Naive thymus-derived CD4-positive, alpha-beta T cell (primary cell): ENCODE measurements at regions of chr11 and their contacts with region 1.

Region 1: DNA sequence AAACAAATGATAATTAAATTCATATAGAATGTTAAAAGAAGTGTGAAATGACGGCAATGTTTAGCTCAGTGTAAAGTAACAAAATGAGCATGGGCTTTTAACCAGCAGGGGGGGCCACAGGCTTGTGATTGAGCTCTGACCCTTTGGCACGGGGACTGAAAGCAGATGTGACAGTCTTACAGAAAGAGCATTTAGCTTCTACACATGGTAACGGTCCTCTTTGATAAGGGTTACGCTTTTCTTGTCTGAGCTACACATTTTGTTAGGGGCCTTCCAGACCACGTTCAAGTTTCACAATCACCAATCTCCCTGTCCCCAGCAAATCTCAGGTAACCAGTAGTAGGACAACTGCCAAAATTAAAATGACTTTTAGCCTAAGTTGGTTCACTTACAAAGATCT is 262.5 kb downstream of the DCDC1 start:
- DNase-seq: peak in 6 of 9 donors; percentile 1 to 25 (median 20)
- ATAC-seq: no peak
- H3K4me3 ChIP-seq: no peak overlapping the region
- H3K4me3 Mint-ChIP-seq: no peak overlapping the region
- H3K27ac ChIP-seq: no peak overlapping the region
- H3K27ac Mint-ChIP-seq: no peak overlapping the region
- H3K4me1 ChIP-seq: no peaks in the 10 kb centered on the region
- H3K4me1 Mint-ChIP-seq: no peaks in the 10 kb centered on the region
- H3K27me3 ChIP-seq: no peaks in the 10 kb centered on the region
- H3K27me3 Mint-ChIP-seq: peaks cover 0 to 10% (median 0%) of the 10 kb centered on the region in 5 donors

Region 2: DNA sequence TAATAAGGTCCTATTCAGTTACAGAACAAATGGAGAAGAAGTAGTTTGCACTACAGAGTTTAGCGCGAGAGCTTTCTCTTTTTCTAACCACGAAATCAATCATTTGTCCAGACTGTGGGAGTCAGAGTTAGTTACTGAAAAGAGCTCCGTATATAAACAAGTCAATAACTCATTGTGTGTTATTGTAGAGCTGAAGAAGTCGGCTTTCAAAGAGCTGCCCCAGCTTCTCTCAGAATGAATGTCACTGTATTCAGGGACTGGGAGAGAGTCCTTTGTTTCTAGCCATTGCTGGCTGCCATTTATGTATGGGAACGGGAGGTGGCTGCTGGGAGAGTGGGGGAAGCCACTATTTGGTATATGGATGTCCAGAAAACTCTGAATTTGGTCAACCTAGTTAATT is 34.7 kb after region 1 on chr11:
- CTCF ChIA-PET with region 1: no interaction called
- POLR2A ChIA-PET with region 1: no interaction called
- intact Hi-C with region 1: no loop called
- DNase-seq: no peak
- ATAC-seq: no peak
- H3K4me3 ChIP-seq: no peak overlapping the region
- H3K4me3 Mint-ChIP-seq: no peak overlapping the region
- H3K27ac ChIP-seq: no peak overlapping the region
- H3K27ac Mint-ChIP-seq: no peak overlapping the region
- H3K4me1 ChIP-seq: no peaks in the 10 kb centered on the region
- H3K4me1 Mint-ChIP-seq: no peaks in the 10 kb centered on the region
- H3K27me3 ChIP-seq: no peaks in the 10 kb centered on the region
- H3K27me3 Mint-ChIP-seq: peaks cover 0 to 12% (median 2%) of the 10 kb centered on the region in 5 donors

Region 3: GRCh38 chr11:31160504-31161422 is 53.7 kb after region 1 on chr11:
- CTCF ChIA-PET with region 1: no interaction called
- POLR2A ChIA-PET with region 1: no interaction called
- intact Hi-C with region 1: no loop called
- DNase-seq: no peak
- ATAC-seq: no peak
- H3K4me3 ChIP-seq: no peak overlapping the region
- H3K4me3 Mint-ChIP-seq: no peak overlapping the region
- H3K27ac ChIP-seq: no peak overlapping the region
- H3K27ac Mint-ChIP-seq: no peak overlapping the region
- H3K4me1 ChIP-seq: no peaks in the 10 kb centered on the region
- H3K4me1 Mint-ChIP-seq: no peaks in the 10 kb centered on the region
- H3K27me3 ChIP-seq: no peaks in the 10 kb centered on the region
- H3K27me3 Mint-ChIP-seq: peaks cover 0 to 6% (median 0%) of the 10 kb centered on the region in 5 donors

Region 4: GRCh38 chr11:32006799-32007388 is 899.8 kb after region 1 on chr11:
- CTCF ChIA-PET with region 1: no interaction called
- POLR2A ChIA-PET with region 1: no interaction called
- intact Hi-C with region 1: loop called in 1 of 2 experiments (anchors 2 kb)
- DNase-seq: peak in 5 of 9 donors; percentile 4 to 27 (median 7)
- ATAC-seq: peak; percentile 64
- H3K4me3 ChIP-seq: no peak overlapping the region
- H3K4me3 Mint-ChIP-seq: peak overlapping the region in 1 of 10 donors; percentile 2
- H3K27ac ChIP-seq: no peak overlapping the region
- H3K27ac Mint-ChIP-seq: no peak overlapping the region
- H3K4me1 ChIP-seq: no peaks in the 10 kb centered on the region
- H3K4me1 Mint-ChIP-seq: peaks cover 0 to 5% (median 0%) of the 10 kb centered on the region in 7 donors
- H3K27me3 ChIP-seq: no peaks in the 10 kb centered on the region
- H3K27me3 Mint-ChIP-seq: peaks cover 17 to 40% (median 35%) of the 10 kb centered on the region in 5 donors